Astrocyte of the cerebellum (primary cell): ENCODE measurements at regions of chr21 and their contacts with region 1.

Region 1: GRCh38 chr21:41733949-41734645 is 32.8 kb downstream of the RIPK4 start:
- DNase-seq: no peak
- H3K4me3 ChIP-seq: no peak overlapping the region
- CTCF ChIP-seq: no peak

Region 2: GRCh38 chr21:41653954-41654491 is 80.1 kb before region 1 on chr21:
- in situ Hi-C with region 1: no loop called
- DNase-seq: no peak
- H3K4me3 ChIP-seq: no peak overlapping the region
- CTCF ChIP-seq: no peak

Region 3: GRCh38 chr21:41671859-41672532 is 62.1 kb before region 1 on chr21:
- in situ Hi-C with region 1: loop called (anchors 5 kb)
- DNase-seq: no peak
- H3K4me3 ChIP-seq: no peak overlapping the region
- CTCF ChIP-seq: no peak

Region 4: DNA sequence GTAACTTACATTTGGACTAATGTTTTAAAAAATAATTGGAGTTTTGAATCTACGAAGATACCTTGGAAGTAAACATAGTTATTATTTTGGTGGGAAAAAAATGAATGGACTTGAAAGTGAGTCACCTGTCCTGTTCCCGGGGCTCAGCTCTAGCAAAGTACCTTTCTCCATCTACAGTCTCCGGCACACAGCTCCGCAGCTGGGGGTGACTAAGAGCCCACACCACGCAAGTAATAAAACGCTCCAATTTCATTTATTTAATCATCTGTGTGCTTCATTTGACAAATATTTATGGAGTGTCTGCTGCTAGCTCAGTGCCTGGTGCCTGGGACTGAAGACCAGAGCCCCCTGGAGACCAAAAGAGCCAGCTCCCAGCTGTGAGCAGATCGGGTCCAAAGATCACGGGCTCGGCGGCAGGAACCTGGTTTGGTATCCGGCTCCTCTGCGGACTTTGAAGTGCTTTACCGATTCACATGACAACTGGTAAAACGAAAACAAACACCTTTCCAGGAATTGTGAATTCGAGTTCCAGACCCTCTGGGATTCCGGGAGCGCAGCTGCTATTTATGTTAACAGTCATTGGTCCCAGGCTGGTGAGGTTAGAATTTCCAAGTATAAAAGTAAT is 34.5 kb after region 1 on chr21:
- in situ Hi-C with region 1: loop called (anchors 5 kb)
- DNase-seq: no peak
- H3K4me3 ChIP-seq: peak overlapping the region; percentile 37
- CTCF ChIP-seq: peak; percentile 59

Region 5: GRCh38 chr21:41786485-41786987 is 52.4 kb after region 1 on chr21:
- in situ Hi-C with region 1: no loop called
- DNase-seq: no peak
- H3K4me3 ChIP-seq: no peak overlapping the region
- CTCF ChIP-seq: no peak